Colonic mucosa (tissue), 4 donors: ENCODE measurements at regions of chr13 and their contacts with region 1.

Region 1: GRCh38 chr13:96034662-96035061 is 18.5 kb downstream of the UGGT2 start:
- DNase-seq: no peak
- H3K4me3 ChIP-seq: no peak overlapping the region
- H3K27ac ChIP-seq: no peak overlapping the region
- H3K4me1 ChIP-seq: no peaks in the 10 kb centered on the region
- H3K27me3 ChIP-seq: no peaks in the 10 kb centered on the region
- CTCF ChIP-seq: no peak

Region 2: DNA sequence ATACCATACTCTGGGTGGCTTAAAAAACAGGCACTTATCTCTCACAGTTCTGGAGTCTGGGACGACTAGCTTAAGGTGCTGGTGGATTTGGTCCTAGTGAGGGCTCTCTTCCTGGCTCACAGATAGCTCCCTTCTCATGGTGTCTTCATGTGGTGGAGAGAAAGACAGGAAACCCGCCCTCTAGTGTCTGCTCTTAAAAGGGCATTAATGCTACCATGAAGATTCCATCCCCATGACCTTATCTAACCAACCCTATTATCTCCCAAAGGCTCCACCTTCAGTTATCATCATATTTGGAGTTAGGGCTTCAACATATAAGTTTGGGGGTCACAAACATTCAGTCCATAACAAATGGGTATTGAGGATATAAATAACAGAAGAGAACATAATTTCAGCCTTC is 194.7 kb after region 1 on chr13:
- intact Hi-C with region 1: loop called (anchors 10 kb)
- DNase-seq: no peak
- H3K4me3 ChIP-seq: no peak overlapping the region
- H3K27ac ChIP-seq: no peak overlapping the region
- H3K4me1 ChIP-seq: no peaks in the 10 kb centered on the region
- H3K27me3 ChIP-seq: no peaks in the 10 kb centered on the region
- CTCF ChIP-seq: no peak